Gastrocnemius medialis (tissue), 4 donors: ENCODE measurements at regions of chr2 and their contacts with region 1.

Region 1: GRCh38 chr2:30511122-30512083 is 64.4 kb downstream of the LCLAT1 start:
- DNase-seq: peak; percentile 59 to 81
- ATAC-seq: peak; percentile 94 to 96
- H3K4me3 ChIP-seq: no peak overlapping the region
- H3K27ac ChIP-seq: peak overlapping the region; percentile 57 to 79 (median 73)
- H3K4me1 ChIP-seq: peaks cover 52 to 53% of the 10 kb centered on the region in 2 donors
- H3K27me3 ChIP-seq: no peaks in the 10 kb centered on the region
- CTCF ChIP-seq: no peak
- POLR2A ChIP-seq: no peak

Region 2: GRCh38 chr2:30653847-30654246 is 142.4 kb after region 1 on chr2:
- in situ Hi-C with region 1: no loop called
- intact Hi-C with region 1: loop called (anchors 10 kb)
- DNase-seq: peak in 1 of 2 donors; percentile 39
- ATAC-seq: peak; percentile 42 to 44
- H3K4me3 ChIP-seq: no peak overlapping the region
- H3K27ac ChIP-seq: no peak overlapping the region
- H3K4me1 ChIP-seq: peaks cover 13 to 20% of the 10 kb centered on the region in 2 donors
- H3K27me3 ChIP-seq: no peaks in the 10 kb centered on the region
- CTCF ChIP-seq: no peak
- POLR2A ChIP-seq: no peak